A673 (cell line): ENCODE measurements at regions of chr10 and their contacts with region 1.

Region 1: DNA sequence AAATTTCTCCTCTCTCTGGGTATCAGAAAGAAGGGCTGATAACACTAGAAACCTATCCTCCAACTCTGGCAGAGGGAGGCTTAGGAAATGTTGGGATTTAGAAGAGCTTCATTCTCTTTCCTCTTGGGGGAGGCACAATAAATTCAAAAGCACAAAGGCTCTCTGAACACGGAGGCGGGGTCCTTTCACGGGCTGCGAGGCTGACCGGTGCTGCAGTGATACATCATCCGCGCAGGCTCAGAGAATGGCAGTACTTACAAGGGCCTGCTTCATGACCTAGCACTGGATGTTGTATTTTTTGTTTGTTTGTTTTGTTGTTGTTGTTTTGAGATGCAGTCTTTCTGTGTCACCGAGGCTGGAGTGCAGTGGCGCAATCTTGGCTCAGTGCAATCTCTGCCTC is 306.2 kb downstream of the SORCS3 start:
- DNase-seq: no peak
- H3K4me3 ChIP-seq: no peak overlapping the region
- H3K27ac ChIP-seq: no peak overlapping the region
- H3K4me1 ChIP-seq: no peaks in the 10 kb centered on the region
- H3K27me3 ChIP-seq: peaks cover 36% of the 10 kb centered on the region
- CTCF ChIP-seq: no peak

Region 2: DNA sequence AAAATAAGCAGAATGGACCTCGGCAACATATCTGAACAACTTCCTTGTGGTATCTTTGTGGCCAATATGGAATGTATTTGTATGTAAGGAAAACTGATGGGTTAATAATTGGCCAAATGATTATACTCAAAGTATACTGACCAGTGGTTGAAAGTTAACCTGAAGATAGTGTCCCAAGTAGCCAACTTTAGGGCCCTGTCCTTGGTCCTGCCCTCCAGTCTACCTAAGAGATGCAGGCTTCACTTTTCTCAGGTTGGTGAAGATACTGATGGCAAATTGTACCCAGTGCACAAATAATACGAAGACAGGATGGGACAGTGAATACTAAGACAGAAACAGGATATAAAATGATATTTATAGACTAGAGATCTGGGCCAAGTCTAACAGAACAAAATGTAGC is 197.0 kb before region 1 on chr10:
- CTCF ChIA-PET with region 1: no interaction called
- POLR2A ChIA-PET with region 1: interaction called, 20 read pairs
- intact Hi-C with region 1: no loop called
- DNase-seq: no peak
- H3K4me3 ChIP-seq: no peak overlapping the region
- H3K27ac ChIP-seq: no peak overlapping the region
- H3K4me1 ChIP-seq: no peaks in the 10 kb centered on the region
- H3K27me3 ChIP-seq: peaks cover 3% of the 10 kb centered on the region
- CTCF ChIP-seq: no peak

Region 3: DNA sequence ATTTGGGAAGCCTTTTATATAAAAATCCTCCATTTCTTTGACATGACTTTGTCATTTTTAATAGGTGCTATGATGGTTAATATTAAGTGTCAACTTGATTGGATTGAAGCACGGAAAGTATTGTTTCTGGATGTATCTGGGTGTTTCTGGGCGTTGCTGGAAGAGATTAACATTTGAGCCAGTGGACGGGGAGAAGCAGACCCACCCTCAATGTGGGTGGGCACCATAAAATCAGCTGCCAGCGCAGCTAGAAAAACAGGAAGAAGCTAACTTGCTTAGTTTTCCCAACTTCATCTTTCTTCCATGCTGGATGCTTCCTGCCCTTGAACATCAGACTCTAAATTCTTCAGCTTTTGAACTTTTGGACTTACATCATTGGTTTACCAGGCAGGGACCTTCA is 696.8 kb after region 1 on chr10:
- CTCF ChIA-PET with region 1: no interaction called
- POLR2A ChIA-PET with region 1: no interaction called
- intact Hi-C with region 1: no loop called
- DNase-seq: no peak
- H3K4me3 ChIP-seq: no peak overlapping the region
- H3K27ac ChIP-seq: no peak overlapping the region
- H3K4me1 ChIP-seq: no peaks in the 10 kb centered on the region
- H3K27me3 ChIP-seq: no peaks in the 10 kb centered on the region
- CTCF ChIP-seq: no peak

Region 4: GRCh38 chr10:106595281-106595680 is 1648.0 kb after region 1 on chr10:
- CTCF ChIA-PET with region 1: no interaction called
- POLR2A ChIA-PET with region 1: no interaction called
- intact Hi-C with region 1: no loop called
- DNase-seq: no peak
- H3K4me3 ChIP-seq: no peak overlapping the region
- H3K27ac ChIP-seq: no peak overlapping the region
- H3K4me1 ChIP-seq: no peaks in the 10 kb centered on the region
- H3K27me3 ChIP-seq: no peaks in the 10 kb centered on the region
- CTCF ChIP-seq: no peak